PC-9 (cell line): ENCODE measurements at regions of chr6 and their contacts with region 1.

Region 1: GRCh38 chr6:26122793-26123674 is 35.8 kb downstream of the HFE start:
- DNase-seq: peak; percentile 91 to 98
- H3K4me3 ChIP-seq: peak overlapping the region; percentile 86
- H3K27ac ChIP-seq: peak overlapping the region; percentile 78
- H3K4me1 ChIP-seq: peaks cover 22% of the 10 kb centered on the region
- H3K27me3 ChIP-seq: no peaks in the 10 kb centered on the region
- CTCF ChIP-seq: no peak

Region 2: DNA sequence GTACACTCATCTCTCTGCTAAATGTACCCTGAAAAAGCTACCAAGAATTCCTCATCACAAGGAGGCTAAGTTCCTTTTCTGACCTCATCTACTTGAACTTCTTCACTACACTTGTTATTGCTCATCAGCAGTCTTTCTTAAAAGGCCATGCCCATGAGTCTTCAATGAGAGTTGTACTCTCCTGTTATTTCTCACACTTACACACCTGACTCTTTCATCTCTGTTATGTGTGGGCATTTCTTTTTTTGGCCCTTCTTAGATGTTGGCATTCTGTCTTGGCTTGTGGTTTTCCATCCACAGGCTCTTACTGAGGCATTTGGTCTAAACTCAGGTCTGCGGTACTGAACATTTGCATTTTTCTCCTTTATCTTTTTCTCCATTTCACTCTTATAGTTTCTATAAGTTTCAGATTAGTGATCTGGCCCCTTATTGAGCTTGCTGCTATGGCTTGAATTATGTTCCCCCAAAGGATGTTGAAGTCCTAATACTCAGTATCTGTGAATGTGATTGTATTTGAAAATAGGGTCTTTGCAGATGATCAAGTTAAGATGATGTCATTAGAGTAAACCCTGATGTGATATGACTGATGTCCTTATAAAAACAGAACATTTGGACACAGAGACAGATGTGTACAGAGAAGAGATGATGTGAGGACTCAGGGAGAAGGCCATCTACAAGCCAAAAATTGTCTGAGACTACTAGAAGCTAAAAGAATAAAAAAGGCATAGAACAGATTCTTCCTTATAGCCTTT is 280.3 kb before region 1 on chr6:
- CTCF ChIA-PET with region 1: no interaction called
- POLR2A ChIA-PET with region 1: no interaction called
- intact Hi-C with region 1: no loop called
- DNase-seq: no peak
- H3K4me3 ChIP-seq: no peak overlapping the region
- H3K27ac ChIP-seq: no peak overlapping the region
- H3K4me1 ChIP-seq: no peaks in the 10 kb centered on the region
- H3K27me3 ChIP-seq: peaks cover 5% of the 10 kb centered on the region; the same call in 1 of the 2 replicates
- CTCF ChIP-seq: no peak

Region 3: DNA sequence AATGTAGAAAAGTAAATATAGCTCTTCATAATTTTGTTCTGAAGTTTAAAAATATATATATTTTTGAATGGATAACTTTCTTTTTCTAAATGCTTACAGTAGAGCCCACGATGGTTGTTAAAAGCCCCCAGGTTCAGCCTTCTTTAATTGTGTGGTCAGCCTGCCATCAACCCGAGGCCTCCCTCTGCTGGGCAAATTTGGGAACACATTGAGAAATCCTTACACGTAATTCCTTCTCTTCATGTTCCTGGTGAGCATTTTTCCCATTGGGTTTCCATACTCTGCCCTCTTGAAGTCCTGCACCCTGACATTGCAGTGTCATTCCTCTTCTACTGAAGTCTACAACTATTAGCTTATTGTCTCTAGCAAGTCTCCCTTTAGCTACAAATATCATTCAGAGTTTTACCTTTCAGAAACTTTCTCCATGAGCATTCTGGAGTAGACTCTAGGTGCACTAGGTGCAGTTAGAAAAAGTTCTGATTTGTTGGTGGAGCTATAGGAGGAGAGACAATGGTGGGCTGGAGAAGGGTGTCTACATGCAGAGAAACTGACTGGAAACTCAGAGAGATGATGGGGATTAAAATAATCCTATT is 119.8 kb before region 1 on chr6:
- CTCF ChIA-PET with region 1: no interaction called
- POLR2A ChIA-PET with region 1: no interaction called
- intact Hi-C with region 1: no loop called
- DNase-seq: peak in 1 of 2 experiments; percentile 61
- H3K4me3 ChIP-seq: no peak overlapping the region
- H3K27ac ChIP-seq: no peak overlapping the region
- H3K4me1 ChIP-seq: no peaks in the 10 kb centered on the region
- H3K27me3 ChIP-seq: no peaks in the 10 kb centered on the region
- CTCF ChIP-seq: peak; percentile 87

Region 4: DNA sequence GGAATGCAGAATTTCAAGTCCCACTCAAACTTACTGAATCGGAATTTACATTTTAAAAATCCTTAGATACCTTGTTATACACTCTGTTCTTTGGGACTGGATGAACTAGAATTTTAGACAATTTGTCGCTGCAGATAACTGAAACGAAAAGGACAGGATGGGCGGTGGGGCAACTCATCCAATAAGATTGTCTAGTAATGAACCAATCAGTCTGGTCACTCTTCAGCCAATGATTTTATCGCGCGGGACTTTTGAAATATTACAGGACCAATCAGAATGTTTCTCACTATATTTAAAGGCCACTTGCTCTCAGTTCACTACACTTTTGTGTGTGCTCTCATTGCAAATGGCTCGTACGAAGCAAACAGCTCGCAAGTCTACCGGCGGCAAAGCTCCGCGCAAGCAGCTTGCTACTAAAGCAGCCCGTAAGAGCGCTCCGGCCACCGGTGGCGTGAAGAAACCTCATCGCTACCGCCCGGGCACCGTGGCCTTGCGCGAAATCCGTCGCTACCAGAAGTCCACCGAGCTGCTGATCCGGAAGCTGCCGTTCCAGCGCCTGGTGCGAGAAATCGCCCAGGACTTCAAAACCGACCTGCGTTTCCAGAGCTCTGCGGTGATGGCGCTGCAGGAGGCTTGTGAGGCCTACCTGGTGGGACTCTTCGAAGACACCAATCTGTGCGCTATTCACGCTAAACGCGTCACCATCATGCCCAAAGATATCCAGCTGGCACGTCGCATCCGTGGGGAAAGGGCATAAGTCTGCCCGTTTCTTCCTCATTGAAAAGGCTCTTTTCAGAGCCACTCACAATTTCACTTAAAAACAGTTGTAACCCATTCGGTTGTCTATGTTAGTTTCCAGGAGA is 77.7 kb before region 1 on chr6:
- CTCF ChIA-PET with region 1: no interaction called
- POLR2A ChIA-PET with region 1: interaction called, 10 read pairs
- intact Hi-C with region 1: no loop called
- DNase-seq: peak; percentile 74 to 88
- H3K4me3 ChIP-seq: peak overlapping the region; percentile 59
- H3K27ac ChIP-seq: peak overlapping the region; percentile 77
- H3K4me1 ChIP-seq: peaks cover 21% of the 10 kb centered on the region; the same call in 1 of the 2 replicates
- H3K27me3 ChIP-seq: no peaks in the 10 kb centered on the region
- CTCF ChIP-seq: no peak; the same call in 1 of the 2 replicates

Region 5: GRCh38 chr6:26065952-26066380 is 57.1 kb before region 1 on chr6:
- CTCF ChIA-PET with region 1: interaction called, 3 read pairs
- POLR2A ChIA-PET with region 1: interaction called, 17 read pairs
- intact Hi-C with region 1: loop called (anchors 1 kb)
- DNase-seq: peak; percentile 65 to 79
- H3K4me3 ChIP-seq: no peak overlapping the region
- H3K27ac ChIP-seq: peak overlapping the region; percentile 69
- H3K4me1 ChIP-seq: peaks cover 36% of the 10 kb centered on the region
- H3K27me3 ChIP-seq: no peaks in the 10 kb centered on the region
- CTCF ChIP-seq: peak; percentile 88

Region 6: GRCh38 chr6:26183581-26184366 is 60.7 kb after region 1 on chr6:
- CTCF ChIA-PET with region 1: interaction called, 8 read pairs
- POLR2A ChIA-PET with region 1: interaction called, 51 read pairs
- intact Hi-C with region 1: no loop called
- DNase-seq: peak; percentile 72 to 87
- H3K4me3 ChIP-seq: peak overlapping the region; percentile 54
- H3K27ac ChIP-seq: peak overlapping the region; percentile 65
- H3K4me1 ChIP-seq: peaks cover 12% of the 10 kb centered on the region; the same call in 1 of the 2 replicates
- H3K27me3 ChIP-seq: no peaks in the 10 kb centered on the region
- CTCF ChIP-seq: no peak

Region 7: DNA sequence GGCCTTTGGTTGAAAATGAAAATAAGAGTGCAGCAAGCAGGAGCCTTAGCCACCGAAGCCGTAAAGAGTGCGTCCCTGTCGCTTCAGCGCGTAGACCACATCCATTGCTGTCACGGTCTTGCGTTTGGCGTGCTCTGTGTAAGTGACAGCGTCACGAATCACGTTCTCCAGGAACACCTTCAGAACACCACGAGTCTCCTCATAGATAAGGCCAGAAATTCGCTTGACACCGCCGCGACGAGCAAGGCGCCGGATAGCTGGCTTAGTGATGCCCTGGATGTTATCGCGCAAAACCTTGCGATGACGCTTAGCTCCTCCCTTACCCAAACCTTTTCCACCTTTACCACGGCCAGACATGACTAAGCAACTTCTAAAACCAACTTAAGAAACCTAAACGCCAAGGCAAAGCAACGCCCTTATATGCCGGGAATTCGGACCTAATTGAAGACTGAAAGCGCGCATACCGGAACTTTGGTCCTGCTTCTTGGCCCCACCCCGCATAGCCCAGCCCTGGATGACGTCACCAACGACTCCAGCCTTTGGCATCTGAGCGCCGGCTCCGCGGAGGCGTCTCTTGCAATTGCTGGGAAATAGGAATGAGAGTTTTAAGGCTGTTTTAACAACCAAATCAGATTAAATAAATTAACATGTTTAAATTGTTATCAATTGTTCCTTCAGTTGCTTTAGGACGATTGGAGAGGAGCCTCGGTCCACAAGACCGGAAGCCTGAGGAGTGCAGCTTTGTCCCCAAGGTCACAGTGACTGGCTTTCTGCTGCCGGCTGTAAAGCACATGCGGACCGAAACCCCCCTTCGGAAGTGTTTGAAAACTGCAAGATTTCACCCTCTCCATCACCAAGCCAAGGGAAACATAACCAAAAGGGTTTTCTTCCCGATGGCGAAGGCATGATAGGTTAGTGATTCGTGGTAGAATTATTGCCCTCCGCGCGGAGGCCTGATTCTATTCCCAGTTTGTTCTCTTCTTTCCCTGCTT is 162.4 kb after region 1 on chr6:
- CTCF ChIA-PET with region 1: no interaction called
- POLR2A ChIA-PET with region 1: interaction called, 3 read pairs
- intact Hi-C with region 1: loop called (anchors 1 kb)
- DNase-seq: peak; percentile 96 to 99
- H3K4me3 ChIP-seq: peak overlapping the region; percentile 84
- H3K27ac ChIP-seq: peak overlapping the region; percentile 93
- H3K4me1 ChIP-seq: peaks cover 11% of the 10 kb centered on the region
- H3K27me3 ChIP-seq: no peaks in the 10 kb centered on the region
- CTCF ChIP-seq: no peak

Region 8: GRCh38 chr6:26596579-26597388 is 473.8 kb after region 1 on chr6 and contains the start of gene ABT1:
- CTCF ChIA-PET with region 1: no interaction called
- POLR2A ChIA-PET with region 1: interaction called, 14 read pairs
- intact Hi-C with region 1: loop called (anchors 1 kb)
- DNase-seq: peak; percentile 94 to 98
- H3K4me3 ChIP-seq: peak within 1 kb of the TSS; percentile 91
- H3K27ac ChIP-seq: peak within 1 kb of the TSS; percentile 48
- H3K4me1 ChIP-seq: 0 out of 2 replicates have a peak, but pooled peaks cover 8% of the 10 kb centered on the region
- H3K27me3 ChIP-seq: no peaks in the 10 kb centered on the region
- CTCF ChIP-seq: no peak
- total RNA-seq, gene ABT1: 16.8 and 19.5 TPM in 2 replicates

Region 9: GRCh38 chr6:27608916-27609883 is 1486.2 kb after region 1 on chr6:
- CTCF ChIA-PET with region 1: no interaction called
- POLR2A ChIA-PET with region 1: no interaction called
- intact Hi-C with region 1: no loop called
- DNase-seq: peak; percentile 68 to 71
- H3K4me3 ChIP-seq: no peak overlapping the region
- H3K27ac ChIP-seq: no peak overlapping the region
- H3K4me1 ChIP-seq: 0 out of 2 replicates have a peak, but pooled peaks cover 8% of the 10 kb centered on the region
- H3K27me3 ChIP-seq: no peaks in the 10 kb centered on the region
- CTCF ChIP-seq: peak; percentile 77